ENCODE measurements at regions of chr19 and their contacts with region 1.

Region 1: GRCh38 chr19:39412100-39412866 is at the start of gene PLEKHG2:
- DNase-seq: peak; percentile 98
- ATAC-seq: peak; percentile 69
- H3K4me3 Mint-ChIP-seq: peak within 1 kb of the TSS; percentile 97
- H3K27ac Mint-ChIP-seq: peak within 1 kb of the TSS; percentile 98
- H3K4me1 Mint-ChIP-seq: peaks cover 37% of the 10 kb centered on the region
- H3K27me3 Mint-ChIP-seq: peaks cover 2% of the 10 kb centered on the region
- total RNA-seq, gene PLEKHG2: 65.7 to 65.9 TPM

Region 2: GRCh38 chr19:39341719-39342604 is 70.3 kb before region 1 on chr19 and contains the start of gene SAMD4B:
- POLR2A ChIA-PET with region 1: interaction called, 13 read pairs
- DNase-seq: peak; percentile 99
- ATAC-seq: peak; percentile 89
- H3K4me3 Mint-ChIP-seq: peak within 1 kb of the TSS; percentile 96
- H3K27ac Mint-ChIP-seq: peak within 1 kb of the TSS; percentile 96
- H3K4me1 Mint-ChIP-seq: peaks cover 51% of the 10 kb centered on the region
- H3K27me3 Mint-ChIP-seq: no peaks in the 10 kb centered on the region
- total RNA-seq, gene SAMD4B: 47.8 to 51.3 TPM

Region 3: DNA sequence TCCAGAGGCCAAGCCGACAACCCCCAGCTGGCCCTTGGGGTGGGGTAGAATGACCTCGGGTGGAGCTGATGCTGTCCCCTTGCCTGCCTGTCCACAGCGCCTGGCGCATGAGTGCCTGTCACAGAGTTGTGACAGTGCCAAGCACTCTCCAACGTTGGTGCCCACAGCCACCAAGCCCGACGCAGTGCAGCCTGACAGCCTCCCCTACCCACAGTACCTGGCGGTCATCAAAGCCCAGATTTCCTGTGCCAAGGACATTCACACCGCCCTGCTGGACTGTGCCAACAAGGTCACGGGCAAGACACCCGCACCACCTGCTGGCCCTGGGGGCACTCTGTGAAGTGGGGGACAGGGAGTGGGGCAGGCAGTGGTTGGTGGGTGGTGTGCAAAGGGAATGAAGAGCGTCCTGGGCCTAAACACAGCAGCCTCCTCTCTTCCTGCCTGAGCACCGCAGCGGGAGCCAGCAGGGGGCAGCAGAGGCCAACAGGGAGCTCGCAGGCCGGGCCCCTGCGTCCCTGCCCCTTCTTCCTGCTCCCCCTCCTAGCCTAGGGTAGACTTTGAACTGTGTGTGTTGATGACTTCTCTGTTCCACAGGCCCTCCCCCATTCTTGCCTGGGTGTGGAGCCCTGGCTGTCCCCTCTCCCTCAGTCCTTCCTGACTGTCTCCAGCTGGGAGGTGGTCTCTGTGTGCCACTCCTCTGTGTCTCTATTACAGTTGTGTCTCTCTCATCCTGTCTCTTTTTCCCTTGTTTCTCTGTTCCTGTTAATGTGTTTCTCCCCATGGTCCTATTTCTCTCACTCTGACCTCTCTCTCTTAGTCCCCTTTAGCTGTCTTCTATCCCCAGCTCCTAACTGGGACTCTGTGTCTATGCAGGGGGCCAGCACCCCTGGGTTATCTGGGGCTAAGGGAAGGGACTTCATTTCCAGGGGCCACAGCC is 14.7 kb before region 1 on chr19:
- POLR2A ChIA-PET with region 1: interaction called, 90 read pairs
- DNase-seq: peak; percentile 97
- ATAC-seq: peak; percentile 76
- H3K4me3 Mint-ChIP-seq: peak overlapping the region; percentile 77
- H3K27ac Mint-ChIP-seq: peak overlapping the region; percentile 91
- H3K4me1 Mint-ChIP-seq: peaks cover 41% of the 10 kb centered on the region
- H3K27me3 Mint-ChIP-seq: no peaks in the 10 kb centered on the region